ENCODE measurements at regions of chr16 and their contacts with region 1.

Region 1: GRCh38 chr16:30407102-30407803 is at the start of gene ZNF771:
- DNase-seq: peak; percentile 93 to 95
- ATAC-seq: peak; percentile 95 to 97 (median 96)
- H3K4me3 ChIP-seq: peak within 1 kb of the TSS; percentile 36 to 88 (median 76)
- H3K27ac ChIP-seq: peak within 1 kb of the TSS; percentile 57 to 93 (median 84)
- H3K4me1 ChIP-seq: peaks cover 7 to 39% (median 26%) of the 10 kb centered on the region in 9 donors
- H3K27me3 ChIP-seq: no peaks in the 10 kb centered on the region
- CTCF ChIP-seq: peak in 2 of 9 donors; percentile 3 to 4
- total RNA-seq, gene ZNF771: 3.8 to 9.0 (median 5.1) TPM

Region 2: GRCh38 chr16:30075507-30076275 is 331.6 kb before region 1 on chr16 and contains the start of gene PPP4C:
- intact Hi-C with region 1: loop called in 1 of 10 experiments (anchors 10 kb)
- DNase-seq: peak; percentile 92 to 93
- ATAC-seq: peak; percentile 86 to 97 (median 95)
- H3K4me3 ChIP-seq: peak within 1 kb of the TSS; percentile 86 to 100 (median 98)
- H3K27ac ChIP-seq: peak within 1 kb of the TSS; percentile 48 to 99 (median 96)
- H3K4me1 ChIP-seq: peaks cover 13 to 55% (median 41%) of the 10 kb centered on the region in 9 donors
- H3K27me3 ChIP-seq: no peaks in the 10 kb centered on the region
- CTCF ChIP-seq: peak in 3 of 9 donors; percentile 24 to 44 (median 34)
- total RNA-seq, gene PPP4C: 35.2 to 50.0 (median 42.4) TPM

Region 3: GRCh38 chr16:30091474-30092372 is 315.5 kb before region 1 on chr16 and contains the start of gene TBX6:
- intact Hi-C with region 1: loop called in 5 of 10 experiments (anchors 2 to 10 kb)
- DNase-seq: peak; percentile 92 to 95
- ATAC-seq: peak; percentile 90 to 94 (median 92)
- H3K4me3 ChIP-seq: peak within 1 kb of the TSS; percentile 39 to 65 (median 56)
- H3K27ac ChIP-seq: peak within 1 kb of the TSS; percentile 39 to 95 (median 88)
- H3K4me1 ChIP-seq: peaks cover 7 to 78% (median 45%) of the 10 kb centered on the region in 9 donors
- H3K27me3 ChIP-seq: no peaks in the 10 kb centered on the region
- CTCF ChIP-seq: peak; percentile 68 to 95 (median 79)
- total RNA-seq, gene TBX6: 0.28 to 1.4 (median 0.57) TPM

Region 4: GRCh38 chr16:30122604-30123160 is 284.6 kb before region 1 on chr16:
- intact Hi-C with region 1: loop called in 1 of 10 experiments (anchors 10 kb)
- DNase-seq: no peak
- ATAC-seq: peak; percentile 4 to 53 (median 33)
- H3K4me3 ChIP-seq: peak overlapping the region; percentile 74 to 98 (median 88)
- H3K27ac ChIP-seq: peak overlapping the region; percentile 94 to 99 (median 97)
- H3K4me1 ChIP-seq: peaks cover 2 to 48% (median 26%) of the 10 kb centered on the region in 9 donors
- H3K27me3 ChIP-seq: no peaks in the 10 kb centered on the region
- CTCF ChIP-seq: no peak

Region 5: DNA sequence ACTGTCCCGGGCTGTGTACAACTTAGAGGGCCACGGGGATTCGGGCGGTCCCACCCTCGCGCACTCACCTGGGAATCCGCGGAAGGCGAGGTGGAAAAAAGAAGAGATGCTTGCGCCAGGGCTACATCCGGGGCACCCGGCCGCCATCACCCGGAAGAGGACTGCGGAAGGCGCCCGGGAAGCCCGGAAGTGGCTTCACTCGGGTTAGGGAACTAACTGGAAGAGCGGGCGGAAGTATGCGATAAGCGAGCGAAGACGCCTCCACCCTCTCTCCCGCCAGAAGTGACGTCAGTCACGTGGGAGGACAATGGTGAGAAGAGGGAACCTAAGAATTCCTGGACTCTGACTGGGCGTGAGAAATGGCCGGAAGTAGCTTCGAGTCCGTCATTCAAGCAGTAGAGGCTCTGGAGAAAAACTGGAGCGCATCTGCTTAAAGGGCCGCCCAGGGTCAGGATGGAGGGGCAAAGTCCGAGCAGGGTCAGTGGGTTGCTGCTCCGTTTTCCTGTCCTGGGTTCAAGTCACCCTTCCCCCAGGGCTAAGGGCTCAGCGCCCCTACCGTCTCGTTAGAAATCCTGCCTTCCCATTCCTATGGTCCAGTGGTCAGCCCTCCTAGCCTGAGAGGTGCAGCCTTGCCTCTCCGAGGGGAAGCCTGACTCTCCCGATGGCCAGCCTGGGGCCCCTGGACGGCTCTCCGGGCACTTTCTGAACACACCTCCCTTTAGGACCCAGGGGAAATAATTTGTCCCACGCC is 51.9 kb before region 1 on chr16 and contains the start of gene CD2BP2:
- intact Hi-C with region 1: loop called in 2 of 10 experiments (anchors 10 kb)
- DNase-seq: peak; percentile 92 to 98
- ATAC-seq: peak; percentile 87 to 96 (median 95)
- H3K4me3 ChIP-seq: peak within 1 kb of the TSS; percentile 47 to 99 (median 82)
- H3K27ac ChIP-seq: peak within 1 kb of the TSS; percentile 70 to 99 (median 97)
- H3K4me1 ChIP-seq: peaks cover 26 to 51% (median 40%) of the 10 kb centered on the region in 9 donors
- H3K27me3 ChIP-seq: no peaks in the 10 kb centered on the region
- CTCF ChIP-seq: no peak
- total RNA-seq, gene CD2BP2: 34.9 to 48.8 (median 38.8) TPM

Region 6: GRCh38 chr16:30368122-30368791 is 39.0 kb before region 1 on chr16:
- intact Hi-C with region 1: loop called in 1 of 10 experiments (anchors 5 kb)
- DNase-seq: no peak
- ATAC-seq: no peak
- H3K4me3 ChIP-seq: peak overlapping the region; percentile 67 to 97 (median 90)
- H3K27ac ChIP-seq: peak overlapping the region in 8 of 10 donors; percentile 15 to 92 (median 85)
- H3K4me1 ChIP-seq: peaks cover 15 to 67% (median 48%) of the 10 kb centered on the region in 9 donors
- H3K27me3 ChIP-seq: no peaks in the 10 kb centered on the region
- CTCF ChIP-seq: no peak

Region 7: DNA sequence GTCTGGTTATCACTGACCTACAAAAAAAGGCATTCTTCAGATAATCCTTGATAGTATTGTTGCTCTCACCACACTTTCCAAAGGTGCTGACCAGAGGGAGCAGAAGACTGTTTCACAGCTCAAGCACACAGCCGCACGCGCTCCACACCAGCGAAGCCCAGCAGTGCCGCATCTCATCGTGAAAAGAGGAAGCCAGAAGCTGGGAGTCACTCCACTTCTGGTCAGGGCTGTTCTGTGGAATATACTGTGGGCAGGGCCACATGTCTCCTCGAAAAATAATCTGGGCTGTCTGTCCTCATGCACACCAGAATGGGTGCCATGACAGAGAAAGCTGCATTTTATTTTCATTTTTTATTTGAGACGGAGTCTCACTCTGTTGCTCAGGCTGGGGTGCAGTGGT is 749.9 kb after region 1 on chr16:
- intact Hi-C with region 1: no loop called
- DNase-seq: peak in 1 of 2 donors; percentile 34
- ATAC-seq: peak in 5 of 8 donors; percentile 46 to 80 (median 50)
- H3K4me3 ChIP-seq: no peak overlapping the region
- H3K27ac ChIP-seq: no peak overlapping the region
- H3K4me1 ChIP-seq: peaks cover 0 to 12% (median 0%) of the 10 kb centered on the region in 9 donors
- H3K27me3 ChIP-seq: peaks cover 0 to 5% (median 0%) of the 10 kb centered on the region in 7 donors
- CTCF ChIP-seq: no peak

Measured in heart right ventricle (tissue), 16 donors.